Left ventricle myocardium inferior (tissue), 1 donor: ENCODE measurements at regions of chr20 and their contacts with region 1.

Region 1: DNA sequence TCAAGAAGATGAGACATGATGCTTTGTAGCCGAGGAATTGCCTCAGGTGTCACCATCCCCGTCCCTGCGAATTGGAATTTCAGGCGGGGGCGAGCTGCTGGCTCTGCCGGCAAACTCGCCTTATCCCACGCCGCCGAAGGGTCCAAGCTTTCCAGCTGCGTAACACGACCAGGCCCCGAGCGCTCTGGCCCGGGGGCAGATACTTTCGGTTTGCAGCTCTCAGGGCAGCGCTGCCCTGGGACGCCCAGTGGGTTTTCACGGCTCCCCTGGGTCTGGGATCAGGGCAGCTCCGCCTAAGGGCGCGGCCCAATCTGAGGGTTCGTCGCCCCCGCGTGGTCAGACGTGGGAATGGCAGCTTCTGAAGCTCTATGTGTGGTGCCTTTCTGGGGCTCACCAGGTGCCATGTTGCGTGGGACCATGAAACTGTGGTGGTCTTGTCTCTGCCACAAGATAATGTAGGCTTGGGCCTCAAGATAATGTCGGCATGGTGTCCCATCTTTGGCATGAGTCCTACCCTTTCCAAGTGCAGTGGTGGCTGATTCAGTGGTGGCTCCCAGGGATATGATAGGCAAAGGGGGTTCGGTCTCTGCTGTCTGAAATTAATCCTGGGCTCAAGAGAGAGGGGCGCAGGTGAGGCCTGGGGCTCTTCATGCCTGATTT is 20.9 kb downstream of the PIGT start:
- DNase-seq: peak; percentile 91
- H3K4me3 ChIP-seq: peak overlapping the region; percentile 70
- H3K27ac ChIP-seq: peak overlapping the region; percentile 83
- H3K4me1 ChIP-seq: peaks cover 19% of the 10 kb centered on the region
- H3K27me3 ChIP-seq: no peaks in the 10 kb centered on the region
- CTCF ChIP-seq: peak; percentile 99

Region 2: DNA sequence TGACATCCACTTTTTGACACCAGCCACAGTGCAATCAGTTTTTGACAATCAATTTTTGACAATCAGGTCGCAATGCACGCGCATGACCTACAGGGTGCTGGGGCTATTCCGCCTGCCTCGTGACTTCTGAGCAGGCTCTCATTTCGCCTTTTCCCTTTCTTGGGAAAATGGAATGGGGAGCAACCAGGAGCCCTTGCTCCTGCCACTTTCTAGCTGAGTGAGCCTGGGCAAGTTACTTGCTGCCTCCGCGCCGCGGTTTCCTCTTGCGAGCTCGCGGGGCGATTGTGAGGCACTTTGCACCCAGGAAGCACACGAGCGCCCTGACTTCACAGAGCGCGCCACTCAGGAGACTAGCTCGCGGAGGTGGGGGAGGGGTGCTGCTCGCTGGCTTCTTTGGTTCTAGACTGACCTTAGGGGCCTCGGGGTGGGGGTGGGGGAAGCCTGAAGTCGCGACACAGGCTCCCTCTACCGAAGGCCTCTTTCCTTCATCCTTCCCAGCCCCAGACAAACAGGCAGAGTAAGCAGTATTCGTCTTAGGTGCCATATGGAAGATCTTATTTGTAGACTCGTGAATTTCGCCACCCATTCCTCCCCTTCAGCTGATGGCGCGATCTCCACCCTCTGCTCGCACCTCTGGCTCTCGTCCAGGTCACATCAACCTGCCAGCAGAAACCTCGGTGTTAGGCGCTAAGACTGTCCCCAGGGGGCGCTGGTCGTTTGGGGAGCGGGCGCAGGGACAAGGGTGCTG is 63.3 kb before region 1 on chr20:
- intact Hi-C with region 1: loop called (anchors 2 kb)
- DNase-seq: peak; percentile 88
- H3K4me3 ChIP-seq: peak overlapping the region; percentile 74
- H3K27ac ChIP-seq: peak overlapping the region; percentile 81
- H3K4me1 ChIP-seq: peaks cover 15% of the 10 kb centered on the region
- H3K27me3 ChIP-seq: no peaks in the 10 kb centered on the region
- CTCF ChIP-seq: peak; percentile 91

Region 3: GRCh38 chr20:45456632-45457031 is 19.8 kb after region 1 on chr20:
- intact Hi-C with region 1: no loop called
- DNase-seq: no peak
- H3K4me3 ChIP-seq: no peak overlapping the region
- H3K27ac ChIP-seq: no peak overlapping the region
- H3K4me1 ChIP-seq: no peaks in the 10 kb centered on the region
- H3K27me3 ChIP-seq: peaks cover 3% of the 10 kb centered on the region
- CTCF ChIP-seq: peak; percentile 32

Region 4: GRCh38 chr20:45495501-45495941 is 58.7 kb after region 1 on chr20:
- intact Hi-C with region 1: no loop called
- DNase-seq: no peak
- H3K4me3 ChIP-seq: no peak overlapping the region
- H3K27ac ChIP-seq: no peak overlapping the region
- H3K4me1 ChIP-seq: no peaks in the 10 kb centered on the region
- H3K27me3 ChIP-seq: peaks cover 64% of the 10 kb centered on the region
- CTCF ChIP-seq: no peak

Region 5: GRCh38 chr20:45538209-45538799 is 101.4 kb after region 1 on chr20:
- intact Hi-C with region 1: no loop called
- DNase-seq: no peak
- H3K4me3 ChIP-seq: no peak overlapping the region
- H3K27ac ChIP-seq: no peak overlapping the region
- H3K4me1 ChIP-seq: no peaks in the 10 kb centered on the region
- H3K27me3 ChIP-seq: peaks cover 95% of the 10 kb centered on the region
- CTCF ChIP-seq: no peak